ENCODE measurements at regions of chr15 and their contacts with region 1.

Region 1: GRCh38 chr15:88834211-88834812 is 31.1 kb downstream of the ACAN start:
- DNase-seq: peak; percentile 12
- H3K4me3 ChIP-seq: no peak overlapping the region
- CTCF ChIP-seq: peak; percentile 82

Region 2: GRCh38 chr15:88844749-88845386 is 10.6 kb after region 1 on chr15:
- CTCF ChIA-PET with region 1: interaction called, 12 read pairs
- POLR2A ChIA-PET with region 1: no interaction called
- DNase-seq: no peak
- H3K4me3 ChIP-seq: no peak overlapping the region
- CTCF ChIP-seq: no peak

Measured in AG04449 (cell line).